CD4-positive, alpha-beta T cell (primary cell): ENCODE measurements at regions of chr15 and their contacts with region 1.

Region 1: DNA sequence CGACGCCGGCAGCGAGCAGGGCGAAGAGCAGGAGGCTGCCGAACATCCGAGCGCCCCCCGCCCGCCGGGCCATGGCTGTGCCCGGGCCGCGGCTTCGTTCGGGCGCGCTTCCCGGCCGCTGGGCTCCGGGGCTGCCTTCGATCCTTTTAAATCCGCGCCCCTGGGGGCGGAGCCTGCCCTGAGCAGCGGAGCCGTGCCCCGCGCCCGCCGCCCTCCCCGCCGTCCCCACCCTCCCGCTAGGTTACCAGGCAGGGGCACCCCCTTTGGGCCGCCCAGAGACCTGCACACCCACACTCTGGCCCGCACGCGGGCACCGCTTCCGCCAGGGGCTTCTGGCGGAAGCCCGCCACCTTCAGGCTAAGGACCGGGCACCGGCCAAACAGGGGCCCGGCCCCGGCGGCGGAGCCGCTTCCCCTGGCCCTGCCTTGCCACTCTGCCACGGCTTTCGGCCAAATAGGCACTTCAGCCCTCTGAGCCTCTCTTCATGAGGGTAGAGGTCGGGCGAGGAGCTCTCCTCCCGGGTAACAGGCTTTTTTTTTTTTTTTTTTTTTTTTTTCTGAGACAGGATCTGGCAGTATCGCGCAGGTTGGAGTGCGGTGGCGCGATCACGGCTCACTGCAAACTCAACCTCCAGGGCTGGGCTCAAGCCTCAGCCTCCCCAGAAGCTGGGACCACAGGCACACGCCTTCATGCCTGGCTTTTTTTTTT is at the start of gene NMB:
- DNase-seq: peak; percentile 70 to 94 (median 82)
- ATAC-seq: peak; percentile 70
- H3K4me3 ChIP-seq: peak within 1 kb of the TSS; percentile 61
- H3K4me3 Mint-ChIP-seq: peak within 1 kb of the TSS; percentile 86
- H3K27ac ChIP-seq: peak within 1 kb of the TSS in 1 of 2 donors; percentile 65
- H3K27ac Mint-ChIP-seq: peak within 1 kb of the TSS; percentile 73
- H3K4me1 ChIP-seq: peaks cover 42% of the 10 kb centered on the region
- H3K4me1 Mint-ChIP-seq: peaks cover 43% of the 10 kb centered on the region
- H3K27me3 ChIP-seq: no peaks in the 10 kb centered on the region
- H3K27me3 Mint-ChIP-seq: no peaks in the 10 kb centered on the region
- CTCF ChIP-seq: peak; percentile 68
- total RNA-seq, gene NMB: 2.2 to 3.7 TPM

Region 2: DNA sequence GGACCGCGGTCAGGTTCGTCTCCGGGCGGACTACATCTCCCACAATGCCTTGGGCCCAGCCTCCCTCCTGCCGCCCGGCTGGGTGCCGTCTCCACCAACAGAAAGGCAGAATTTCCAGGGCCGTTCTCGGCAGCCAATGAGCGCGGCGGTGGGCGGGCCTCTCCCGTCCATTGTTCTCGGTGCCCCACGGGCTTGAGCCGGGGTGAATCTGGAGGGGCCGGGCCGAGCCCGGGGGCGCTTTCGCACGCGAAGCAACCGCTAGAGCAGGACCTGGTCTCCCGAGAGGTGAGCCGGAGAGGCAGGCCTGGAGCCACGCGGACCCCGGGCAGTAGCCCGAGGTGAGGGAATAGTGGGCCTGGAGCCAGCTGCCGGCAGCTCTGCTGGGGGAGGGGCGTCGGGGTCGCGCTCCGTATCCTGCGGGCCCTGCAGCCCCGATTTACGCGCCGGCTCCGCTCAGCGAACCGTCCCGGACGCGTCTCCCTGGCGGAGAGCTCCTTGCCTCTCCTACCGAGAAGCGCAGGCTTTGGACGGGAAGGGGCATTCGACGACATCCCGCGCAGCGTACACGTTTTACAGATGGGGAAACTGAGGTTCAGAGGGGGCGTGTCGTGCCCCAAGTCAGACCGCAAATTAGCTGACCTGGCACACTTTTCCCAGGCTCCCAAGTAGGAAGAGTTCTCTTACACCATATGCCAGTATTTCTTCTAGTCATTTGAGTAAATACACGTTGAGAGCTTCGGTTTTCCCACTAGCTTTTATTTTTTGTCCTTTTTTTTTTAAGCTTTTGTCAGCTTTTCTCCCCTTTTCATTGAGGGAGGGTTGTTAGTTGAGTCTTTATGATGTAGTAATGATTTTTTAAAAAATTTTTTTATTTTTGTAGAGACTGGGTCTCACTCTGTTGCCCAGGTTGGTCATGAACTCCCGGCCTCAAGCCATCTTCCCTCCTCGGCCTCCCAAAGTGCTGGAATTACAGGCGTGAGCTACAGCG is 57.1 kb before region 1 on chr15 and contains the start of gene ZSCAN2:
- CTCF ChIA-PET with region 1: interaction called, 3 read pairs
- POLR2A ChIA-PET with region 1: interaction called, 16 read pairs
- intact Hi-C with region 1: loop called in 1 of 2 experiments (anchors 1 kb)
- DNase-seq: peak; percentile 87 to 95 (median 90)
- ATAC-seq: peak; percentile 97
- H3K4me3 ChIP-seq: peak within 1 kb of the TSS; percentile 95
- H3K4me3 Mint-ChIP-seq: peak within 1 kb of the TSS; percentile 98
- H3K27ac ChIP-seq: peak within 1 kb of the TSS in 1 of 2 donors; percentile 13
- H3K27ac Mint-ChIP-seq: peak within 1 kb of the TSS; percentile 78
- H3K4me1 ChIP-seq: peaks cover 62% of the 10 kb centered on the region
- H3K4me1 Mint-ChIP-seq: peaks cover 72% of the 10 kb centered on the region
- H3K27me3 ChIP-seq: no peaks in the 10 kb centered on the region
- H3K27me3 Mint-ChIP-seq: no peaks in the 10 kb centered on the region
- CTCF ChIP-seq: no peak
- total RNA-seq, gene ZSCAN2: 3.8 to 5.0 TPM

Region 3: GRCh38 chr15:84725001-84725491 is 66.8 kb after region 1 on chr15:
- CTCF ChIA-PET with region 1: no interaction called
- POLR2A ChIA-PET with region 1: interaction called, 10 read pairs
- intact Hi-C with region 1: no loop called
- DNase-seq: peak in 7 of 14 experiments; percentile 19 to 87 (median 50)
- ATAC-seq: peak; percentile 79
- H3K4me3 ChIP-seq: peak overlapping the region; percentile 1
- H3K4me3 Mint-ChIP-seq: peak overlapping the region; percentile 63
- H3K27ac ChIP-seq: peak overlapping the region; percentile 44 to 51
- H3K27ac Mint-ChIP-seq: peak overlapping the region; percentile 90
- H3K4me1 ChIP-seq: peaks cover 64% of the 10 kb centered on the region
- H3K4me1 Mint-ChIP-seq: peaks cover 66% of the 10 kb centered on the region
- H3K27me3 ChIP-seq: no peaks in the 10 kb centered on the region
- H3K27me3 Mint-ChIP-seq: no peaks in the 10 kb centered on the region
- CTCF ChIP-seq: no peak

Region 4: GRCh38 chr15:84761607-84762131 is 103.4 kb after region 1 on chr15:
- CTCF ChIA-PET with region 1: no interaction called
- POLR2A ChIA-PET with region 1: interaction called, 5 read pairs
- intact Hi-C with region 1: loop called in 1 of 2 experiments (anchors 5 kb)
- DNase-seq: peak in 2 of 14 experiments; percentile 10 to 19
- ATAC-seq: peak; percentile 81
- H3K4me3 ChIP-seq: no peak overlapping the region
- H3K4me3 Mint-ChIP-seq: no peak overlapping the region
- H3K27ac ChIP-seq: peak overlapping the region in 1 of 2 donors; percentile 54
- H3K27ac Mint-ChIP-seq: no peak overlapping the region
- H3K4me1 ChIP-seq: peaks cover 57% of the 10 kb centered on the region
- H3K4me1 Mint-ChIP-seq: no peaks in the 10 kb centered on the region
- H3K27me3 ChIP-seq: no peaks in the 10 kb centered on the region
- H3K27me3 Mint-ChIP-seq: no peaks in the 10 kb centered on the region
- CTCF ChIP-seq: no peak

Region 5: DNA sequence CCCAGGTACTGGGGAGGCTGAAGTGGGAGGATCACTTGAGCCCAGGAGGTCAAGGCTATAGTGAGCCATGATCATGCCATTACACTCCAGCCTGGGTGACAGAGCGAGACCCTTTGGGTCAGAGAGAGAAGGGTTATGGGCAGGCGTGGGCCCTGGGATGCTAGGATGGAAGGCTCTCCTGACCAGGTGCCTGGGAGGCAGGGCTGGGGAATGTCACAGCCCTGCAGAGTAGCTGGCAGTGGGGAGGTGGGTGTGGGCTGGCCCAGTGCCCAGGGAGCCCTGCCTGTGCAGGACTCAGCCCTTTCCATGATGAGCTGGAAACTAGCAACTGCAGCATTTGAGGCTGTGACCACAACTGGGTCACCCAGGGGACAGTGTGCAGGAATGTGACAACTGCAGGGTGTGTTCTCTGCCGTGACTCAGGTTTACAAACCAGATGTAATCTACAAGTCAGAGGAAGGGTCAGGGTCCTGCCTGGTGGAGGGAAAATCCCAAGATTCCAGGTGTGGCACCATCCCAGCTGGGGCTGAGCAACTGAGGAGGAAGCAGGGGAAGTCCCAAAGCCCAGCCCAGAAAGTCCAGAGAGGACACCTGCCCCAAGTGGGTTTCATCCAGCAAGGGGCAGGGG is 271.6 kb after region 1 on chr15:
- CTCF ChIA-PET with region 1: interaction called, 4 read pairs
- POLR2A ChIA-PET with region 1: interaction called, 5 read pairs
- intact Hi-C with region 1: loop called (anchors 1 kb)
- DNase-seq: no peak
- ATAC-seq: no peak
- H3K4me3 ChIP-seq: no peak overlapping the region
- H3K4me3 Mint-ChIP-seq: no peak overlapping the region
- H3K27ac ChIP-seq: no peak overlapping the region
- H3K27ac Mint-ChIP-seq: no peak overlapping the region
- H3K4me1 ChIP-seq: peaks cover 3% of the 10 kb centered on the region
- H3K4me1 Mint-ChIP-seq: peaks cover 6% of the 10 kb centered on the region
- H3K27me3 ChIP-seq: no peaks in the 10 kb centered on the region
- H3K27me3 Mint-ChIP-seq: no peaks in the 10 kb centered on the region
- CTCF ChIP-seq: no peak